ENCODE measurements at regions of chr4 and their contacts with region 1.

Region 1: GRCh38 chr4:176034499-176034898 is 31.1 kb upstream of the WDR17 start:
- DNase-seq: peak in 1 of 10 donors; percentile 28
- H3K4me3 ChIP-seq: no peak overlapping the region
- H3K27ac ChIP-seq: peak overlapping the region in 10 of 59 donors; percentile 4 to 38 (median 24)
- H3K27me3 ChIP-seq: no peaks in the 10 kb centered on the region
- CTCF ChIP-seq: peak in 55 of 56 donors; percentile 49 to 83 (median 67)

Region 2: GRCh38 chr4:176340871-176341685 is 306.6 kb after region 1 on chr4:
- intact Hi-C with region 1: loop called (anchors 2 to 5 kb)
- DNase-seq: no peak
- H3K4me3 ChIP-seq: peak overlapping the region in 45 of 59 donors; percentile 9 to 60 (median 44)
- H3K27ac ChIP-seq: peak overlapping the region in 1 of 59 donors; percentile 1
- H3K27me3 ChIP-seq: no peaks in the 10 kb centered on the region
- CTCF ChIP-seq: peak; percentile 35 to 90 (median 76)

Region 3: GRCh38 chr4:176833400-176834175 is 799.1 kb after region 1 on chr4:
- intact Hi-C with region 1: no loop called
- DNase-seq: no peak
- H3K4me3 ChIP-seq: no peak overlapping the region
- H3K27ac ChIP-seq: no peak overlapping the region
- H3K27me3 ChIP-seq: no peaks in the 10 kb centered on the region
- CTCF ChIP-seq: no peak

Measured in dorsolateral prefrontal cortex (tissue), 120 donors.